HEK293 (cell line): ENCODE measurements at regions of chr9 and their contacts with region 1.

Region 1: DNA sequence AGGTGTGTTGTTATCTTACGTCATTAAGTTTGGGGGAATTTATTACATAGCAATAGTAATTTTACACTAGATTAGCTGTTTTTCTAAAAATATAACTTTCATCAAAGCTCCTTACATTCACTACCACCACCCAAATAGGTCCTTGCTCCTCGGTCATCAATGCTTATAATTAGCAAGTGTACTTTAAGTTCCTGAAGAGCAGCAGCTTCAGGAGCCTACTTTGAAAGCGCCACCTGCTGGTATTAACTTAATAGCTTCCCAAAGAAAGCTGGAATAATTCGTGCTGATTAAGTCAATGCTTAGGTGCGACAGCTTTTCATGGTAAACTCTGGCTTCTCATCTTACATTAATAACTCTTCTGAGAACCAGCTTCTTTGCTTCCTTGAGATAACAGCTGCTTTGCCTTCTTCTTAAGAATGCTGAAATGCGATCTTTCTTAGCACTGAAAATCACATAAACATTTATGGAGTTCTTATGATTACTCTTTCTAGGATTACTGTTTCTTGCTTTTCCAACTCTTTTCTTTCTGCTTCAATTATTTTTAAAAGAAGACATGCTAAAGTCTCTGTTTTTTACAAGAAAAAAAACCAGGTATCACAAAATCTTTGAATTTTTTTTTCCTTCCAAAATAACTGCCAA is 10.0 kb upstream of the C5 start:
- H3K4me3 ChIP-seq: no peak overlapping the region
- H3K27ac ChIP-seq: no peak overlapping the region
- H3K4me1 ChIP-seq: no peaks in the 10 kb centered on the region
- CTCF ChIP-seq: no peak

Region 2: GRCh38 chr9:120985810-120986222 is 74.3 kb before region 1 on chr9:
- CTCF ChIA-PET with region 1: interaction called, 119 read pairs
- POLR2A ChIA-PET with region 1: interaction called, 3 read pairs
- H3K4me3 ChIP-seq: no peak overlapping the region
- H3K27ac ChIP-seq: no peak overlapping the region
- H3K4me1 ChIP-seq: no peaks in the 10 kb centered on the region
- CTCF ChIP-seq: no peak; the same call in 1 of the 2 replicates

Region 3: GRCh38 chr9:121029469-121029868 is 30.6 kb before region 1 on chr9:
- CTCF ChIA-PET with region 1: interaction called, 12 read pairs
- POLR2A ChIA-PET with region 1: no interaction called
- H3K4me3 ChIP-seq: no peak overlapping the region
- H3K27ac ChIP-seq: no peak overlapping the region
- H3K4me1 ChIP-seq: no peaks in the 10 kb centered on the region
- CTCF ChIP-seq: no peak

Region 4: DNA sequence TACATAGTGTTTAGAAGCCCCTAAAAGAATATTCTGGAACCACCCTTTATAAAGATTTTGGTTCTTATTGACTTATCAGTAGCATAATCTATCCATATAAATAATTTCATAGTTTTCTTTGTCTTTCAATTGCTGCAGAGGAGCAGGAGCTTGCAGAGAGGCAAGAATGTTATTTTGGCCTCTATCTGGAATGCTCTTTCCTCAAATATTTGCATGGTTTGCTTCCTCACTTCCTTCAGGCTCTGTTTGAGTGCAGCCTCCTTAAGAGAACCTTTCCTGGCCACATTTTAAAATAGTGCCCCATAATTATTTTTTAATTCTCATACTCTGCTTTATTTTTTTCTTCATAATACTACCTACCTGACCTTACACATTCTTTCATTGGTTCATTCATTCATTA is 11.5 kb before region 1 on chr9:
- CTCF ChIA-PET with region 1: interaction called, 45 read pairs
- POLR2A ChIA-PET with region 1: no interaction called
- H3K4me3 ChIP-seq: no peak overlapping the region
- H3K27ac ChIP-seq: no peak overlapping the region
- H3K4me1 ChIP-seq: no peaks in the 10 kb centered on the region
- CTCF ChIP-seq: no peak

Region 5: DNA sequence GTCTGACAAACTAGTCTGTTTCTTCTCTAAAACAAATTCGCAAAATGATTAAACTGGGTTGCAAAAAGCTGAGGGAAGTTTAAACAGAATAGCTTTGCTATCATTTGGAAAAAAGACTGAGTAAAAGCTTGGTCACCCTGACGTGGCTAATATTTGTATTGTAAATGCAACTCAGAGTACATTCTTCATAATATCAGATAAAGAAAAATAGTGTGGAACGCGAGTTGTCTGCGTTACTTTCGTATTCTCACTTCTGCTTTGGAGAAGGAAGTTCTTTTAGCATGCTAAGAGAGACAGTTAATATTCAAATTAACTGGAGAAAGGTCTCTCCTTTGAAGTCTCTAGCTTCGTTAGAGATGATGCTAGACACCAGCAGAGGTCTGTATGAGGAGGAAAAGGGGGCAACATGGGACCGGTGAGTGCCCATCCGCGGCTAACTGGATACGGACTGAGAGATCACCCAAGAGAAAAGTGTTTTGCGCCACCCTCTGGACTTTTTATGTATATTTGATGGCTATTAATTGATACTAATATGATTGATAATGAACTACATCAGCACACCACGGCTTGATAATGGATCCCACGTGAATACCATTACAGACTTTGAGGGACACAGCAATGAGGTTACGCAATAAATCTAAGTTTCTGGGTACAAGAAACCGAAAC is 11.8 kb after region 1 on chr9:
- CTCF ChIA-PET with region 1: interaction called, 11 read pairs
- POLR2A ChIA-PET with region 1: interaction called, 3 read pairs
- H3K4me3 ChIP-seq: no peak overlapping the region
- H3K27ac ChIP-seq: no peak overlapping the region
- H3K4me1 ChIP-seq: peaks cover 2% of the 10 kb centered on the region; the same call in 1 of the 2 replicates
- CTCF ChIP-seq: no peak